ENCODE measurements at regions of chr11 and their contacts with region 1.

Region 1: GRCh38 chr11:61129639-61130523 is 27.6 kb downstream of the CD5 start:
- DNase-seq: peak; percentile 83
- H3K4me3 Mint-ChIP-seq: peak overlapping the region; percentile 54
- H3K27ac Mint-ChIP-seq: peak overlapping the region; percentile 23
- H3K4me1 Mint-ChIP-seq: peaks cover 6% of the 10 kb centered on the region
- H3K27me3 Mint-ChIP-seq: no peaks in the 10 kb centered on the region
- CTCF ChIP-seq: peak; percentile 100

Region 2: GRCh38 chr11:60691661-60692060 is 438.2 kb before region 1 on chr11:
- CTCF ChIA-PET with region 1: no interaction called
- POLR2A ChIA-PET with region 1: no interaction called
- intact Hi-C with region 1: no loop called
- DNase-seq: no peak
- H3K4me3 Mint-ChIP-seq: no peak overlapping the region
- H3K27ac Mint-ChIP-seq: no peak overlapping the region
- H3K4me1 Mint-ChIP-seq: no peaks in the 10 kb centered on the region
- H3K27me3 Mint-ChIP-seq: peaks cover 33% of the 10 kb centered on the region
- CTCF ChIP-seq: no peak

Region 3: GRCh38 chr11:60775420-60775961 is 354.4 kb before region 1 on chr11:
- CTCF ChIA-PET with region 1: interaction called, 10 read pairs
- POLR2A ChIA-PET with region 1: no interaction called
- intact Hi-C with region 1: loop called (anchors 1 kb)
- DNase-seq: peak; percentile 79
- H3K4me3 Mint-ChIP-seq: no peak overlapping the region
- H3K27ac Mint-ChIP-seq: no peak overlapping the region
- H3K4me1 Mint-ChIP-seq: peaks cover 16% of the 10 kb centered on the region
- H3K27me3 Mint-ChIP-seq: no peaks in the 10 kb centered on the region
- CTCF ChIP-seq: peak; percentile 82

Region 4: GRCh38 chr11:60964801-60965200 is 165.1 kb before region 1 on chr11:
- CTCF ChIA-PET with region 1: interaction called, 11 read pairs
- POLR2A ChIA-PET with region 1: no interaction called
- intact Hi-C with region 1: no loop called
- DNase-seq: no peak
- H3K4me3 Mint-ChIP-seq: no peak overlapping the region
- H3K27ac Mint-ChIP-seq: no peak overlapping the region
- H3K4me1 Mint-ChIP-seq: no peaks in the 10 kb centered on the region
- H3K27me3 Mint-ChIP-seq: peaks cover 12% of the 10 kb centered on the region
- CTCF ChIP-seq: no peak

Region 5: GRCh38 chr11:61041755-61042518 is 87.9 kb before region 1 on chr11:
- CTCF ChIA-PET with region 1: no interaction called
- POLR2A ChIA-PET with region 1: no interaction called
- intact Hi-C with region 1: no loop called
- DNase-seq: peak; percentile 4
- H3K4me3 Mint-ChIP-seq: no peak overlapping the region
- H3K27ac Mint-ChIP-seq: no peak overlapping the region
- H3K4me1 Mint-ChIP-seq: no peaks in the 10 kb centered on the region
- H3K27me3 Mint-ChIP-seq: no peaks in the 10 kb centered on the region
- CTCF ChIP-seq: no peak

Region 6: GRCh38 chr11:61111786-61112517 is 17.9 kb before region 1 on chr11:
- CTCF ChIA-PET with region 1: interaction called, 54 read pairs
- POLR2A ChIA-PET with region 1: interaction called, 3 read pairs
- intact Hi-C with region 1: no loop called
- DNase-seq: no peak
- H3K4me3 Mint-ChIP-seq: no peak overlapping the region
- H3K27ac Mint-ChIP-seq: no peak overlapping the region
- H3K4me1 Mint-ChIP-seq: no peaks in the 10 kb centered on the region
- H3K27me3 Mint-ChIP-seq: no peaks in the 10 kb centered on the region
- CTCF ChIP-seq: no peak

Region 7: DNA sequence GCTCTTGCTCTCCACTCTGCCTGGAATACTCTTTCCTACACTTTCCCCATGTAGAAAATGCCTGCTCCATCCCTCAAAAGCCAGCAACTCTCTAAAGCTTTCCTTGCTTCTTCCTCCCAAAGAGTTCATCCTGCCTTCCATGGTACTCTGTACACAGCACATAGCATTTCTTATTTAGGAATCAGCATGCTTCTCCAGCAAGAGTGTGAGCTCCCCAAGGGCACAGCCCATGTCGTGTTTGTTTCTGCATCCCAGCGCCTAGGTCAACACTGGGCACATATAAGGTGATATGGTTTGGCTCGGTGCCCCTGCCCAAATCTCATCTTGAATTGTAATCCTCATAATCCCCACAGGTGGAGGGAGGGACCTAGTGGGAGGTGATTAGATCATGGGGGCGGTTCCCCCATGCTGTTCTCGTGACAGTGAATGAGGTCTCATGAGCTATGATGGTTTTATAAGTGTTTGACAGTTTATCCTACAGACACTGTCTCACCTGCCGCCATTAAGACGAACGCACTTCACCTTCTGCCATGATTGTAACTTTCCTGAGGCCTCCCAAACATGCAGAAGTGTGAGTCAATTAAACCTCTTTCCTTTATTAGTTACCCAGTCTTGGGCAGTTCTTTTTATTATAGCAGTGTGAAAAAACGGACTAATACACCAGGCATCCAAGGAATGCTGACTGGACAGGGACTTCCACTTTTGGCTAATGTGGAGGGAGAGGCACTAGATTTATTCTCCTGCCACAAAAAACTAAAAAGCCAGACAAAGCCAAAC is 23.1 kb after region 1 on chr11:
- CTCF ChIA-PET with region 1: interaction called, 10 read pairs
- POLR2A ChIA-PET with region 1: no interaction called
- intact Hi-C with region 1: no loop called
- DNase-seq: peak; percentile 47
- H3K4me3 Mint-ChIP-seq: peak overlapping the region; percentile 26
- H3K27ac Mint-ChIP-seq: peak overlapping the region; percentile 87
- H3K4me1 Mint-ChIP-seq: peaks cover 32% of the 10 kb centered on the region
- H3K27me3 Mint-ChIP-seq: no peaks in the 10 kb centered on the region
- CTCF ChIP-seq: no peak

Region 8: GRCh38 chr11:61516675-61517572 is 387.0 kb after region 1 on chr11:
- CTCF ChIA-PET with region 1: no interaction called
- POLR2A ChIA-PET with region 1: no interaction called
- intact Hi-C with region 1: no loop called
- DNase-seq: peak; percentile 30
- H3K4me3 Mint-ChIP-seq: no peak overlapping the region
- H3K27ac Mint-ChIP-seq: no peak overlapping the region
- H3K4me1 Mint-ChIP-seq: no peaks in the 10 kb centered on the region
- H3K27me3 Mint-ChIP-seq: no peaks in the 10 kb centered on the region
- CTCF ChIP-seq: peak; percentile 99